Activated CD4-positive, alpha-beta memory T cell treated with anti-CD3 and anti-CD28 coated beads, Interleukin-2, amount 10 ng/mL, durations not matched to agents 7 days and 5 days (primary cell): ENCODE measurements at regions of chr19 and their contacts with region 1.

Region 1: DNA sequence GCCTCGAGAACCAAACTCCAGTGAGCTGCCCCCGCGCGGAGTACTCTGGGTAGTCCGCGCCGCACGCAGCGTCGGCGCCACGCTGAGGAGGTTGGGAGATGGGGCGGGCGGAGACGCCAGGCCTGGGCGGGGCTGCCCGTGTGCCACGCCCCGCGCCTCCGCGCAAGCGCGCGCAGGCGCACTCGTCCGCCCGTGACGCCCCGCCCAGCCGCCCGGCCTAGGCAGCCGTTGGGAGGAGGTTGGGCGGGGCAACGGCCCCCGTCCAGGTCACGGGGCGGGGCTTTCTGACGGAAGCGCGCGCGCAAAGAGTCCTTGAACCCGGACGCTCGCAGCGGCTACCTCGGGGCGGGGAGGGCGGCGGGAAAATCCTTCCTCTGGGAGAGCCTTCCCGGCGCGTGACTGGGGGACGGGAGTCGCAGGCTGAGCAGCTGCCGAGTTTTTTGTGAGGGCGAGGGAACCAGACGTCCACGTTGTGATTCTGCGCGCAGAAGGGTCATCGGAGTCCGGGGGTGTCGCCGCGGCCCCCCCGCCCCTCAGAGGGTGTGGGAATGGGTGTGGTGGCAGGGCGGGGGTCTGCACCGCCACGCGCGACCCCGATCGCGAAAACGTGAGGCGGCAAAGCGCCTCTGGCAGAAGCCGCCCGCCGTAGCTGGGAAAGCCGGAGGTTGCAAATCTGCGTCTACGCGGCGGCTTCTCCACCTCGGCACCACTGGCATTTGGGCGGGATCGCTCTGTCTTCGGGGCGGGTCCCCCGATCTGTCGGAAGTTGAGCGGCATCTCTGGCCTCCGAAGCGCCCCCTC is at the start of gene MED26:
- DNase-seq: peak; percentile 96
- H3K4me3 Mint-ChIP-seq: peak within 1 kb of the TSS; percentile 99
- H3K27ac Mint-ChIP-seq: peak within 1 kb of the TSS; percentile 100
- H3K4me1 Mint-ChIP-seq: peaks cover 63% of the 10 kb centered on the region
- H3K27me3 Mint-ChIP-seq: no peaks in the 10 kb centered on the region
- total RNA-seq, gene MED26: 15.5 to 15.9 TPM

Region 2: DNA sequence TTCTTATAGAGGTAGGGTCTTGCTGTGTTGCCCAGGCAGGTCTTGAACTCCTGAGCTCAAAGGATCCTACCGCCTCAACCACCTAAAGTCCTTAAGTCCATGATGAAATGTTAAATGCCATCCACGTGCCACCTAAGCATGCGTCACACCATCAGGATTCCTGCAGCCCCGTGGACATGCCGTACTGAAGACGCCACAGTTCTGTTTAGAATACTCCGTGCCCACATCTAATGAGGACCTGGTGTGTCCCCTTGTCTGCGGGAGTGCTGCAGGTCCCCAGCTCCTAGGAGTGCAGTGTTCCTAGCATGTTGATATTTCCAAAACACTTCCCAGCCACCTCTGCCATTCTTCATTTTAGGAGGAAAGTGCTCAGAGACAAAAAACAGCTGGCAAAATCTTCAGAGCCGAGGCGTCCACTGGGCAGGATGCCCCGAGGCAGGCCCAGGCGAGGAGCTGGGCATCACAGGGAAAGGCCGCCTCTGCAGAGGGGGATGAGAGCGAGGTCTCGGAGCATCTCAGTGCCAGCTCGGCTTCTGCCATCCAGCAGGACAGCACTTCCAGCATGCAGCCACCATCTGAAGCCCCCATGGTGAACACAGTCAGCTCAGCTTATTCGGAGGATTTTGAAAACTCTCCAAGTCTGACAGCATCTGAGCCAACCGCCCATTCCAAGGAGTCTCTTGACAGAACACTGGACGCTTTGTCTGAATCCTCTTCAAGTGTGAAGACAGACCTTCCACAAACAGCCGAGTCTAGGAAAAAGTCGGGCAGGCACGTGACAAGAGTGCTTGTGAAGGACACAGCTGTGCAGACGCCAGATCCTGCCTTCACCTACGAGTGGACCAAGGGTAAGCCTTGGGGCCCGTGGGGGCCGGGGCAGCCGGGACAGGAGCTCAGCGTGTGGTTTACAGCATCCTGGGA is 119.0 kb before region 1 on chr19:
- CTCF ChIA-PET with region 1: no interaction called
- POLR2A ChIA-PET with region 1: no interaction called
- DNase-seq: no peak
- H3K4me3 Mint-ChIP-seq: no peak overlapping the region
- H3K27ac Mint-ChIP-seq: no peak overlapping the region
- H3K4me1 Mint-ChIP-seq: peaks cover 1% of the 10 kb centered on the region
- H3K27me3 Mint-ChIP-seq: no peaks in the 10 kb centered on the region

Region 3: GRCh38 chr19:16566161-16566560 is 62.2 kb before region 1 on chr19:
- CTCF ChIA-PET with region 1: no interaction called
- POLR2A ChIA-PET with region 1: interaction called, 15 read pairs
- DNase-seq: peak; percentile 91
- H3K4me3 Mint-ChIP-seq: peak overlapping the region; percentile 62
- H3K27ac Mint-ChIP-seq: peak overlapping the region; percentile 100
- H3K4me1 Mint-ChIP-seq: peaks cover 61% of the 10 kb centered on the region
- H3K27me3 Mint-ChIP-seq: no peaks in the 10 kb centered on the region

Region 4: DNA sequence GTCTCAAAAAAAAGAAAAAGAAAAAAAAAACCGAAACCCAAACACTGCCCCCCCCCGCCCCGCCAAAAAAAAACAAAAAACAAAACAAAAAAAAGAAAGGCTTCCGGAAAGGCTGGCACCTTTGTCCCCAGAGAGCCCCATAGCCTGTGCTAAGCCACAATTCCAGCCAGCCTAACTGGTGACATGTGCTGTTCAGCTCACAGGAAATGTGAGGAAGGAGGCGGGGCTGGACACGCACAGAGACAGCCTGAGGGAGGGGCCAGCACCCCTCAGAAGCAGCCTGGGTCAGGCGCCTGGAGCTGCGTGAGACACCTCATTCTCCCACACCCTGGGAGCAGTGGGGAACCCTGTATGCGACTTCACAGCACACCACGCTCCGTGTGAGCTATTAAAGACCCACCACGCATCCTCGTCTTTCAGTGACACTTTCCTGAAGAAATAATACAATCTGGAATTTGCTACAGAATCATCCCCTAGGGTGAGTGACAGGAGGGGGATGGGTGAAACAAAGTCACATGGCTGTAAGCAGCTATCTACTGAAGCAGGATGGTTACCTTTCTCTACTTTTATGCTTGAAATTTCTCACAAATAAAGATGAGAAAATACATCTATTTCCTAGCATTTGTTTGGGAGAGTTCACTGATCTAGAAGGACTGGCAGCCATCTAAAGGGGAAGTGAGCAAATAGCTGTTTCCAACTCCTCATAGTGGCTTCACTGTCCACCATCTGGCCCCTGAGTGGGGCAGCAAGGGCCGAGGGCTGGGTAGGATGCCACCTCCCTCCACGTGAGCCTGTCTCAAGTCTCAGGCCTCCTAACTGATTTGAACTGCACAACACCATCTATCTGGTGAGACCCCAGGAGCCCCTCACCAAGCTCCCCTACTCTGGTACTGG is 43.9 kb before region 1 on chr19:
- CTCF ChIA-PET with region 1: interaction called, 6 read pairs
- POLR2A ChIA-PET with region 1: interaction called, 136 read pairs
- DNase-seq: peak; percentile 93
- H3K4me3 Mint-ChIP-seq: peak overlapping the region; percentile 77
- H3K27ac Mint-ChIP-seq: peak overlapping the region; percentile 90
- H3K4me1 Mint-ChIP-seq: peaks cover 83% of the 10 kb centered on the region
- H3K27me3 Mint-ChIP-seq: no peaks in the 10 kb centered on the region

Region 5: DNA sequence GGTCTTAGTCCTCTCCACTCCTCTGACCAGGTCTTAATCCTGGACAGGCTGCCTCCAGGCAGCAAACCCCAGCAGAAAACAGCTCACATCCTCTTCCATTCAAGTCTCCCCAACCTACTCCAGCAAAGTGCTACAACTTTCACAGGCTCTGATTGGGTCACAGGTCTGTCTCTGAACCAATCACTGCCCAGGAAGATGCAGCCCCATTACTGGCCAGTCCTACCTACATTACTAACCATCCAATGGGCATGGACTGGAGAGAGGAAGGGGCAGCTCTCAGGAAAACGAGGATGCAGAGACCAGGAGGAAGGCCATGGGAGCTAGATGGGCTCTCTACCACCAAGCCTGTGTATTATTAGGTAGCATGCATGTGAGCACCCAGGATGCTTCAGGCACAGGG is 12.6 kb before region 1 on chr19:
- CTCF ChIA-PET with region 1: no interaction called
- POLR2A ChIA-PET with region 1: interaction called, 23 read pairs
- DNase-seq: no peak
- H3K4me3 Mint-ChIP-seq: no peak overlapping the region
- H3K27ac Mint-ChIP-seq: no peak overlapping the region
- H3K4me1 Mint-ChIP-seq: peaks cover 72% of the 10 kb centered on the region
- H3K27me3 Mint-ChIP-seq: no peaks in the 10 kb centered on the region

Region 6: GRCh38 chr19:16737911-16738310 is 109.5 kb after region 1 on chr19:
- CTCF ChIA-PET with region 1: no interaction called
- POLR2A ChIA-PET with region 1: no interaction called
- DNase-seq: no peak
- H3K4me3 Mint-ChIP-seq: no peak overlapping the region
- H3K27ac Mint-ChIP-seq: no peak overlapping the region
- H3K4me1 Mint-ChIP-seq: no peaks in the 10 kb centered on the region
- H3K27me3 Mint-ChIP-seq: peaks cover 4% of the 10 kb centered on the region